ENCODE measurements at regions of chr9 and their contacts with region 1.

Region 1: DNA sequence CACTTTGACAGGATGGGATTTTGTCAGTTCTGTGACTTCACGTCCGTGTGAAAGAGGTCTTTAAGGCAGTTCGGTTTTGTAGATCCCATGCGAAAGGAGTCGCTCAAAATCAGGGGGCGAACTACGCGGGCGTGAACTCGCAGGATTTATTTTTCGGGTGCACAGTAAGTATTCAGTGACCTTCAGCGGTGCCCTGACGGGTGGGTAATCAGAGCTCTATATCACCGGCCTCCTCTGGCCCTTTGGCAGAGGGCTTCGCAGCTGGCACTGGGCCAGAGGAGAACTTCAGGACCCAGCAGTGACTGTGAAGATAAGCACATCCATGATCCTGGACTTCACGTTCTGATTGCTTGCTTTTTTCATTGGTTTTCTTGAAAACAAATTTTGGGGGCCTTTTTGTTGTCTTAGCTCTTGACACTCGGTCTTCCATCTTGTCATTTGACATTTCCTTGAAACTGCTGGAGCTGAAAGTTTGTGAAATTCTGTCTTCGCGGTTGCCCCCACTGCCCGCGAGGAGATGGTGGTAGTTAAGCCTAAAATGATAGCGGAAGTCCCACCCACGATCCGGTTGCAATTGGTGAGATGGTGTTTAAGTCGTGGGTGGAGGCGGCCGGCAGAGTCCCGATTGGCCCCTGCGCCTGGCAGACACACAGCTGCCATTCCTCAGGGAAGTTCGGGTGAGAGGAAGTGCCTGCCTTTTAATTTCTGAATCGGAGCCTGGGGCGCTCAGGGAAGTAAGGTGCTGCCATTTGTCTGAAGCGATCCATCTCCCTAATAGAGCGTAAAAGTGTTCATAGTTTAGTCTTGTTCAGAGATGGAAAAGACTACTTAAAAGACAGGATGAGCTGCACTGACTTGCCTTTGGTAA is at the start of gene FAM120AOS:
- ATAC-seq: peak; percentile 59 to 84 (median 80)
- H3K4me3 ChIP-seq: peak within 1 kb of the TSS; percentile 69 to 97 (median 80)
- H3K27ac ChIP-seq: peak within 1 kb of the TSS; percentile 96 to 98
- H3K4me1 ChIP-seq: peaks cover 12 to 24% of the 10 kb centered on the region in 2 donors
- total RNA-seq, gene FAM120AOS: 22.5 to 44.4 (median 24.9) TPM

Region 2: DNA sequence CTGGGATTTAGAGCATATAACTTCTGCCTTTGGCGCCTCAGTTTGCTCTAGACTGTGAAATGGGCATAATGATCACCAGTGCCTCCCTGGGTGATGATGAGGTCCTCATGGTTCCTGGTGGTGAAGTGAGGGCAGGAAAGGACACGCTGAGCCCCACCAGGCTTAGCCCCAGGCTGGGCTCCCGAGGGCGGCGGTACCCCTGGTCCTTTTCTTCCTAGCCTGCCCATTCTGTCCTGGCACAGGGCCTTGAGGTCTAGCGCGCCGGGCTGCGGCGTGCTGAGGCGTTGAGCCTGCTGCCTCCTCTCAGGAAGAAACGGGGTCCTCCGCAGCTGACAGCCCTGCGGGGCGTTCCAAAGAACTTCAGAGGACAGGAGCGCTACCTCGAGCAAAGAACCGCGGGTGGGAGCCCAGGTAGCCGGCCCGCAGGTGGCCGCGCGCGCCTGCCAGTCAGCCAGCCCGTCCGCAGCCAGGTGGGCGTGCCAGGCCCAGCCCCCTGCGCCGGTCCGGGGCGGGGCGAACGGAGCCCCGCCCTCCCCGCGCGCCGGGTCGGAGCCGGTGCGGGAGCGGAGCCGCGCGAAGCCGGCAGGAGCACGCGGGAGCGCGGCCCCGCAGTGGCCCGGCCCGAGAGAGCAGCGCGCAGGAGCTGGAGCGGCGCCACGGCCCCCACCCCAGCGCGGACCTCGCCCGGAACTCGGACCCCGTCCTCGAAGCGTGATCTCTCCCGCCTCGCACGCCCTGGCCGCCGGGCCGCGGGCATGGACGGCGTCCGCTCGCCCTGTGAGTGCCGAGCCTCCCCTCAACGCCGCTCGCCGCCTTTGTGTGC is 269.5 kb before region 1 on chr9 and contains the start of gene WNK2:
- in situ Hi-C with region 1: loop called in 1 of 9 experiments (anchors 25 kb)
- ATAC-seq: peak; percentile 46 to 85 (median 78)
- H3K4me3 ChIP-seq: peak within 1 kb of the TSS; percentile 53 to 82 (median 62)
- H3K27ac ChIP-seq: peak within 1 kb of the TSS; percentile 29 to 55
- H3K4me1 ChIP-seq: peaks cover 21 to 30% of the 10 kb centered on the region in 2 donors
- total RNA-seq, gene WNK2: 0.77 to 34.3 (median 19.2) TPM

Region 3: DNA sequence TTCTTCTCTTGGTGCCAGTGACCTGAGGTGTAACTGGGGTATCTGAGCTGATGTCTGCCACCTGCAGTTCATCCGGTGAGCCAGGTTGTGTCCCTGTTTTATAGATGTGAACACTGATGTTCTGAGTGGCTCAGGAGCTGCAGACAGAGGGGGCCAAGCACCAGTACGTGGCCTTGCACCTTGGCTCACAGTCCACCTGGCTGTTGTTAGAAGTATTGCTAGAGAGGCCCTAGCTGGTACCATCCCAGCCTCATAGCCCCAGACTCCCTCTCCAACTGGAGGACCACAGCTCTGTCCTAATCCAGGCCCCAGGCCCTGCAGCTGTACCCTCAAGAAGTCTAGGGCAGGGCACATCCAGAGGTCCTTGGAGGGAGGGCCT is 139.4 kb after region 1 on chr9:
- in situ Hi-C with region 1: no loop called
- ATAC-seq: peak in 3 of 8 experiments; percentile 15 to 23 (median 17)
- H3K4me3 ChIP-seq: no peak overlapping the region
- H3K27ac ChIP-seq: no peak overlapping the region
- H3K4me1 ChIP-seq: peaks cover 7 to 21% of the 10 kb centered on the region in 2 donors

Measured in motor neuron (in vitro differentiated cells).